BJ (cell line): ENCODE measurements at regions of chr1 and their contacts with region 1.

Region 1: DNA sequence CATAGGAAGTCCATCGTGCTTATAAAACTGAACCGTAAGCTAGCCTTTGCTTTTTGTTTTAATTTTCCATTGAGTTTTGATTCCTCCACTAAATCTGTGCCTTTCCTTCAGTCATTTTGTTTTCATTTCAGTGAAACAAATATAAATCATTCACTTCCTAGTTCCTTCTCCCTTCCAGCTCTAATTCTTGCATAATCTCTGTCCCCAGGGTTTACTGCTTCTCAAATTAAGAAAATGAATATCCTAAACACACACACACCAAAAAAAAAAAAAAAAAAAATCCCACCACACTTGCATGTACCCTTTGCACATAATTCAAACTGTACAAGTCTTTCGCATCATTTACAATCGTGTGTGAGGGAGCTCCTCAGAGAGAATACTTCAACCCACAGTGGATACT is 6.8 kb downstream of the KCNH1 start:
- DNase-seq: no peak
- H3K4me3 ChIP-seq: no peak overlapping the region
- H3K27me3 ChIP-seq: no peaks in the 10 kb centered on the region
- CTCF ChIP-seq: no peak

Region 2: DNA sequence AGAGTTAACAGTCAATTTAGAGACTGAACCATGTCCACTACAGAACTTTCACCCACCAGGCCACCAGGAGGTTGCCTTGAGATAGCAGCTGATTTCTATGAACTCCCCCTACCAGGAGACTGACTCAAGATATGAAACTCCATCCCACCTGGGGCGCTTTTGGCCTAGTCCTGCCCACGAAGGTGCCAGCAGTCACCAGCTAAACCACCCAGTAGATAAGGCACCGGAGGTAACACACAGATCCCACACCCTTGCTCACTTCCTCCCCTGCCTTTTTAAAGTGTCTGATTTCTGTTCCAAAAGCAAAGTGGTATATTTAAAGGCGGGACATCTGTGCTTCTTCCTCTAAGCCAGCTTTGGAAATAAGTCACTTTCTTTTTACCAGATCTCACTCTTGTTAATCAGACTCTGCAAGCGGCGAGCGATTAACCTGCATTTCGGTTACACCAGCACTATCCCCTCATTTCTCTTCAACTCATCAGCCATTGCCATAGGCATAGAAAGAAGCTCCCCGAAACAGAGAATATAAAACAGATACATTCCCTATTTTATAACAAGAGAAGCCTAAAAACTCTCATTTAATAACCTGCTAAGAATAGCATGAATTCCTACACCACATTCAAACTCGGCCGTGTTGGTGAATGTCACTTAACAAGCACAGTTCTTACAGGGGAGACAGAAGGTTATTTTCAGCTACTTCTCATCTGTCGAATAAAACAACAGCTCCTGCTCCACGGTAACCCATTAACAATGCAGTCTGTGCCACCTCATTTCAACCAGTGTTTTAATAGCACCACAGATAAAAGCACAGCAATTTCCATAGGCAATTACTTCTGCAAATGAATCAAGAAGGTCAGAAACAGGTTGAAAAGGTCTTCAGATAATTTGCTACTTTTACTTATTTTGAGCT is 311.3 kb before region 1 on chr1:
- CTCF ChIA-PET with region 1: no interaction called
- POLR2A ChIA-PET with region 1: interaction called, 10 read pairs
- DNase-seq: no peak
- H3K4me3 ChIP-seq: no peak overlapping the region
- H3K27me3 ChIP-seq: no peaks in the 10 kb centered on the region
- CTCF ChIP-seq: no peak

Region 3: DNA sequence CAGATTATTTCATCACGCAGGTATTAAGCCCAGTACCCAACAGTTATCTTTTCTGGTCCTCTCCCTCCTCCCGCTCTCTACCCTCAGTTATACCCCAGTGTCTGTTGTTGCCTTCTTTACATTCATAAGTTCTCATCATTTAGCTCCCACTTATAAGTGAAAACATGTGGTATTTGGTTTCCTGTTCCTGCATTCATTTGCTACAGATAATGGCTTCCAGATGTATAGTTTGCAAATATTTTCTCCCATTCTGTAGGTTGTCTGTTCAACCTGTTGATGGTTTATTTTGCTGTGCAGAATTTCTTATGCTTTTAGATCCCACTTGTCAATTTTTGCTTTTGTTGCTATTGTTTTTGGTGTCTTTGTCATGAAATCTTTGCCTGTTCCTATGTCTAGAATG is 27.9 kb after region 1 on chr1:
- CTCF ChIA-PET with region 1: no interaction called
- POLR2A ChIA-PET with region 1: no interaction called
- DNase-seq: no peak
- H3K4me3 ChIP-seq: no peak overlapping the region
- H3K27me3 ChIP-seq: no peaks in the 10 kb centered on the region
- CTCF ChIP-seq: no peak

Region 4: GRCh38 chr1:211305044-211305443 is 177.9 kb after region 1 on chr1:
- CTCF ChIA-PET with region 1: no interaction called
- POLR2A ChIA-PET with region 1: no interaction called
- DNase-seq: no peak
- H3K4me3 ChIP-seq: no peak overlapping the region
- H3K27me3 ChIP-seq: no peaks in the 10 kb centered on the region
- CTCF ChIP-seq: no peak